CD14-positive monocyte (primary cell): ENCODE measurements at regions of chr6 and their contacts with region 1.

Region 1: DNA sequence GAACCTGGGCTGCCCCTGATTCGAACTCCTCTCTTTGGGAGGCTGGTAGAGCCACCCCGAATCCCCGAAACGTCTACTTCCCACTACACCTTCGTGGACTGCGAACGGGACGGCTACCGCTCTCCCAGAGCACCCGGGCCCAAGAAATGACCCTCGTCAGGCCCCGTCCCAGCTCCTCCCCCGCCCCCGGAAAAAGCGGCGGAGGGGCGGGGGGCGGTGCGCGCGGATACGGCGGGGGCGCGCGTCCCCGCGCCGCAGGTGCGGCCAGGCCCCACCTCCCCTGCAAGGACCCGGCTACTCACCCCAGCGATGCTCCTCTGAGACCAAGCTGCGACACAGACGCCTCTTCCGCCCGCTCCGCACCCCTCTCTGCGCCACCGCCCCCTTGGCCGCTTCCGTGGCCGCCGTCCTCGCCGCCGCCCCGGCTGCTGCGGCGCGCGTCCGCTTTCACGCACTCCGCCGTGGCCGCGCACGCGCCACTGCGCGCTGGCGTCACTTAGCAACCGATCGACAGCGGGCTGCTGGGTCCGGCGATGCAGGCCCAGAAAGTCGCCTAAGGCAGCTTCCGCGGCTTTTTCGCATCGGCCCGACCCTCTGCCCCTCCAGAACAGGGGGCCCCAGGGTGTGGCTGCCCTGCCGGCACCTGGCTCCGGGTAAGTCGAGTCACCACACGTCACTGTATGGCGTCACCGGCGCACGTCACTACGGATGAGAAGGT is at the start of gene BTBD9:
- DNase-seq: peak; percentile 80 to 87 (median 85)
- H3K4me3 ChIP-seq: peak within 1 kb of the TSS; percentile 87 to 92 (median 88)
- H3K4me3 Mint-ChIP-seq: peak within 1 kb of the TSS; percentile 91 to 94
- H3K27ac ChIP-seq: peak within 1 kb of the TSS; percentile 87 to 96
- H3K27ac Mint-ChIP-seq: peak within 1 kb of the TSS; percentile 91 to 97 (median 95)
- H3K4me1 ChIP-seq: peaks cover 16 to 23% of the 10 kb centered on the region in 2 donors
- H3K4me1 Mint-ChIP-seq: peaks cover 28% of the 10 kb centered on the region
- H3K27me3 ChIP-seq: no peaks in the 10 kb centered on the region
- H3K27me3 Mint-ChIP-seq: peaks cover 0 to 2% (median 0%) of the 10 kb centered on the region in 3 donors
- CTCF ChIP-seq: no peak
- polyA plus RNA-seq, gene BTBD9: 5.2 to 7.5 (median 6.2) TPM

Region 2: GRCh38 chr6:38508894-38509293 is 130.8 kb before region 1 on chr6:
- intact Hi-C with region 1: no loop called
- DNase-seq: peak; percentile 23 to 54 (median 39)
- H3K4me3 ChIP-seq: peak overlapping the region in 1 of 3 experiments; percentile 12
- H3K4me3 Mint-ChIP-seq: no peak overlapping the region
- H3K27ac ChIP-seq: peak overlapping the region in 1 of 2 donors; percentile 56
- H3K27ac Mint-ChIP-seq: no peak overlapping the region
- H3K4me1 ChIP-seq: peaks cover 23 to 25% of the 10 kb centered on the region in 2 donors
- H3K4me1 Mint-ChIP-seq: no peaks in the 10 kb centered on the region
- H3K27me3 ChIP-seq: no peaks in the 10 kb centered on the region
- H3K27me3 Mint-ChIP-seq: no peaks in the 10 kb centered on the region
- CTCF ChIP-seq: no peak

Region 3: DNA sequence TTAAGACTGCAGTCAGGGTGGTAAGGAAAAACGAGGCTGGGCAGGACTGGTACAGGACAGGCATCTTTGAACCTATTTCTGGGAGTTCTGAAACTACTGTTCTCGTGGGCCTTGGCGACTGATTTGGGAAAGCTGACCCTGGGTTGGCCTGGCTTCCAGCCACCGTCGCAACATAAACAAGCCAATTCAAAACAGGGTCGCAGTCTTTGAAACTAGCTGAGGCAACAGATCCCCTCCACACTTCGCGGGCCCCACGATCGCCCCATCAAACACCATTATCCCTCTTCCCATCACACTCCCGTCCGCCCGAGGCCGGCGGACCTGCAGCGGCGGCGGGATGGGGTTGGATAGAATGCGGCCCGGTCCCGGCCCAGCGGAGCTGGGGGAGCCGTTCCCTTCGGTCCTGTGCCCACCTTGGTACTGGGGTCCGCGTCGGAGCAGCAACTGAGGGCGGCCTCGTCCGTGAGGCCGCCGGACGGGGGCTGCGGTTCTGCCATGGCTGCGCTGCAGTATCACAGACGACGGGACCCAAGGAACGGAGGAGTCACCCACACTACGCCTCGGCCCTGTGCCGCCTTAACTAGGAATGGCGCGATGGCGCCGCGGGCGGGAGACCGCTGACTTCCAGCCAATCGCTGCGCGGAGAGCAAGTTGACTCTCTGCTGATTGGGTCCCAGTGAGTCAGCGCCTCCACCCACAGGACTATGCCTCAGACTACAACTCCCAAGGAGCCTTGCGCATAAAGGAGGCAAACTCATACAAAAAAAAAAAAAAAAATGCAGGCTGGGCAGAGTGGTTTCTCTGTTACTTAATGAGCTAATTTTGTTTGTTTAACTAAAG is 63.1 kb after region 1 on chr6 and contains the start of gene GLO1:
- intact Hi-C with region 1: loop called (anchors 5 kb)
- DNase-seq: peak; percentile 95 to 96 (median 96)
- H3K4me3 ChIP-seq: peak within 1 kb of the TSS; percentile 46 to 90 (median 81)
- H3K4me3 Mint-ChIP-seq: peak within 1 kb of the TSS; percentile 86 to 94
- H3K27ac ChIP-seq: peak within 1 kb of the TSS; percentile 54 to 82
- H3K27ac Mint-ChIP-seq: peak within 1 kb of the TSS; percentile 59 to 91 (median 85)
- H3K4me1 ChIP-seq: peaks cover 8 to 11% of the 10 kb centered on the region in 2 donors
- H3K4me1 Mint-ChIP-seq: peaks cover 12% of the 10 kb centered on the region
- H3K27me3 ChIP-seq: no peaks in the 10 kb centered on the region
- H3K27me3 Mint-ChIP-seq: peaks cover 2 to 15% (median 6%) of the 10 kb centered on the region in 3 donors
- CTCF ChIP-seq: no peak
- polyA plus RNA-seq, gene GLO1: 11.4 to 68.6 (median 62.6) TPM